CD8-positive, alpha-beta memory T cell (primary cell): ENCODE measurements at regions of chr11 and their contacts with region 1.

Region 1: DNA sequence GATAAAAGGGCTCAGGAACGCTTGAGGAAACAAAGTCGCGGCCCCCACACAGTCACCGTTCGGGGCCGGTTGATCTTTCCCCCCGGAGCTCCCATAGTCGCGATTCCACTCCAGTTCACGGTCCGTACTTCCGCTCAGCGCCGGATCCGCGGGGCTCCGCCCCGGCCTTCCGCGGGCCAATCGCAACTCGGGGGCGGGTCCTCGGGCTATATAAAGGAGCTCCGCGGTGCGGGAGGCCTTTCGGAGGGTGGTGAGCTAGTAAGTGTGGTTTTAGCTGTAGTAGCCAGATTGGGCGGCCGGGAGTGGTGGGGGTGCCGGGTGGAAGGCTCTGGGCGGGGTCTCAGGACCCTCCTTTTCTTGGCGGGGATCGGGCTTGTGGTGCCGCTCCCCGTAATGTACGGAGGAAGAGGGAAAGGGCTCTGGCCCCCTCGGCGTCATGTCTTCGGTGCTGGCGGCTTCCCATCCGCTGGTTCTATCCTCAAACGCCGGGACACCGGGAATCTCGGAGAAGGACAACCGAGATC is at the starts of genes C11orf98 and CSKMT:
- DNase-seq: peak; percentile 89 to 97 (median 94)
- H3K4me3 ChIP-seq: peak within 1 kb of the TSS; percentile 98
- H3K4me3 Mint-ChIP-seq: peak within 1 kb of the TSS; percentile 96 to 100 (median 97)
- H3K27ac ChIP-seq: peak within 1 kb of the TSS; percentile 89
- H3K27ac Mint-ChIP-seq: peak within 1 kb of the TSS; percentile 94 to 99 (median 96)
- H3K4me1 ChIP-seq: peaks cover 24% of the 10 kb centered on the region
- H3K4me1 Mint-ChIP-seq: peaks cover 33 to 53% (median 33%) of the 10 kb centered on the region in 3 donors
- H3K27me3 ChIP-seq: no peaks in the 10 kb centered on the region
- H3K27me3 Mint-ChIP-seq: peaks cover 0 to 4% of the 10 kb centered on the region in 2 donors
- total RNA-seq, gene C11orf98: 178 to 182 TPM
- total RNA-seq, gene CSKMT: 43.1 to 48.3 TPM

Region 2: DNA sequence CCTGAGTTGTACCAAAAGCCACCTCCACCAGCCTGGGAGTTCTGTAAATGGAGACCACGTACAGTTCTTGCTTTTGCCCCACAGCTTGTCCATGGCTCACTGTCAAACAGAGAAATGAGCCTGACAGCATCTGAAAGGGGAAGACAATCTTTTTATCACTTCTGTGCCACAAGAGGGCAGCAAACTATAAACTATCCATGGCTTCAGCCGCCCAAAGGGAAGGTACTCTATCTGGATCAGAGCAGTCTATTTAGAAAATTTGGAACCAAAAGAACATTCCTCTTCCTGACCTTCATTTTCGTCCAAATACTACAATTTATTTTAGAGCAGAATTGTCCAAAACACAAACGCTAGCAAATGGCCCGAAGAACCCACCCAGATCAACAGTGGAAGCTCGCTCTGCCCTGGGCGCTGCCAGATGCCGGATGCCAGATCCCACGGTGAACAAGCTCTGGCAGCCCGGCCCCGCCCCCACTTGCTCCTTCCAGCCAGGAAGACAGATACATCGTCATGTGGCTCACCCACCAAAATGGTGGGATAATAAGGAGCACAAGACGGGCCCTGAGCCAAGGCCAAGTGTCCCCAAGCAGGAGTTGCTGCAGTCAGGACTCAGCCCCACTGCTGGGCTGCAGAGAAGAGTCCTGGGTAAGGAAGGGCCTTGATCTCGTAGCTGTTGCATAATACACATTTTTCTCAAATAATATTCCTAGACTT is 270.2 kb before region 1 on chr11:
- CTCF ChIA-PET with region 1: no interaction called
- POLR2A ChIA-PET with region 1: no interaction called
- DNase-seq: peak; percentile 22 to 62 (median 52)
- H3K4me3 ChIP-seq: no peak overlapping the region
- H3K4me3 Mint-ChIP-seq: no peak overlapping the region
- H3K27ac ChIP-seq: no peak overlapping the region
- H3K27ac Mint-ChIP-seq: no peak overlapping the region
- H3K4me1 ChIP-seq: peaks cover 19% of the 10 kb centered on the region
- H3K4me1 Mint-ChIP-seq: peaks cover 10 to 20% (median 16%) of the 10 kb centered on the region in 3 donors
- H3K27me3 ChIP-seq: no peaks in the 10 kb centered on the region
- H3K27me3 Mint-ChIP-seq: peaks cover 0 to 2% of the 10 kb centered on the region in 2 donors

Region 3: DNA sequence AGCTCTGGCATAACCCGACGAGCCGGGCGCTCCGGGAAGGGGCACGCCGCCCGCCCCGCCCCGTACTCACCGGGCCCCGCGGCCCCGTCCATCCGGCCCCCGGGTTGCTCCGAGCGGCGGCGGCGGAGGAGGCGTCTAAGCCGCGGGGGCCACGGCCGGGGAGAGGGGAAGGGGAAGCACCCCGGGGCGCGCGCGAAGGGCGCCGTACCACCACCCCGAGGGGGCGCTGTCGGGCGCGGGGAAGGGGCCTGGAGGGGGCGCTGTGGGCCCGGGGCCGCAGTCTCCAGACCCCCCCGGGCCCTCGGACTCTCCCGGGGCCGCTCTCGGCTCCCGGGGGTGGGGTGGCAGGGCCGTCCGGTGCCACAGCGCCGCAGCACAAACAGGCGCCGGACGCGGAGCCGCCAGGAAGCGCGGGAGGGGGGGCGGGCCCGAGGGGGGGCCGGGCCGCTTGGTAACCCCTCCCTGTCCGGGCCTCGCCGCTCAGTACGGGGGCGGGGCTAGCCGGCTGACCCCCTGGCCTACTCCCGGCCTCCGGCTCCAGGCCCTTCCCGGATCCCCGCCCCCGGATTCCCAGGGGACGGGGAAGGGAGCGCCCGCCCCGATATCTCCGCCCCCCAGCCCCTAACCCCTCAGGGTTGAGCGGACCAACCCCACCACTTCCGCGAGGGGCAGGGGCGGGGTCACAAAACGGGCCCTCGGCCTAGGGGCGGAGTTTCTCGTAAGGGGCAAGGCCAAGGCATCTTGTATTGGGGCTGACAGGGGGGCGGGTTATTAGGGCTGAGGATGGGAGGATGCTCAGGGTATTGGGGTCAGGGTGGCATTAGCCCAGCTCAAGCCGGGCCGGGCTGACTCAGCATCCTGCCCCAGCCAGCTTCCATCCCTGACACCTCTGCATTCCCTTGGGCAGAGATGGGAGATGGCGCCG is 52.5 kb before region 1 on chr11 and contains the starts of genes EML3 and ROM1:
- CTCF ChIA-PET with region 1: interaction called, 13 read pairs
- POLR2A ChIA-PET with region 1: interaction called, 4 read pairs
- DNase-seq: peak; percentile 81 to 93 (median 85)
- H3K4me3 ChIP-seq: peak within 1 kb of the TSS; percentile 76
- H3K4me3 Mint-ChIP-seq: peak within 1 kb of the TSS; percentile 89 to 99 (median 95)
- H3K27ac ChIP-seq: peak within 1 kb of the TSS; percentile 83
- H3K27ac Mint-ChIP-seq: peak within 1 kb of the TSS; percentile 92 to 99 (median 97)
- H3K4me1 ChIP-seq: peaks cover 30% of the 10 kb centered on the region
- H3K4me1 Mint-ChIP-seq: peaks cover 39 to 64% (median 42%) of the 10 kb centered on the region in 3 donors
- H3K27me3 ChIP-seq: no peaks in the 10 kb centered on the region
- H3K27me3 Mint-ChIP-seq: no peaks in the 10 kb centered on the region
- total RNA-seq, gene EML3: 133 to 134 TPM
- total RNA-seq, gene ROM1: 4.9 to 5.3 TPM

Region 4: GRCh38 chr11:62652161-62653006 is 12.8 kb before region 1 on chr11:
- CTCF ChIA-PET with region 1: interaction called, 27 read pairs
- POLR2A ChIA-PET with region 1: interaction called, 52 read pairs
- DNase-seq: peak in 1 of 5 donors; percentile 65
- H3K4me3 ChIP-seq: peak overlapping the region; percentile 83
- H3K4me3 Mint-ChIP-seq: peak overlapping the region; percentile 85 to 95 (median 91)
- H3K27ac ChIP-seq: peak overlapping the region; percentile 87
- H3K27ac Mint-ChIP-seq: peak overlapping the region; percentile 80 to 97 (median 86)
- H3K4me1 ChIP-seq: peaks cover 15% of the 10 kb centered on the region
- H3K4me1 Mint-ChIP-seq: peaks cover 15 to 29% (median 20%) of the 10 kb centered on the region in 3 donors
- H3K27me3 ChIP-seq: no peaks in the 10 kb centered on the region
- H3K27me3 Mint-ChIP-seq: peaks cover 0 to 7% of the 10 kb centered on the region in 2 donors

Region 5: DNA sequence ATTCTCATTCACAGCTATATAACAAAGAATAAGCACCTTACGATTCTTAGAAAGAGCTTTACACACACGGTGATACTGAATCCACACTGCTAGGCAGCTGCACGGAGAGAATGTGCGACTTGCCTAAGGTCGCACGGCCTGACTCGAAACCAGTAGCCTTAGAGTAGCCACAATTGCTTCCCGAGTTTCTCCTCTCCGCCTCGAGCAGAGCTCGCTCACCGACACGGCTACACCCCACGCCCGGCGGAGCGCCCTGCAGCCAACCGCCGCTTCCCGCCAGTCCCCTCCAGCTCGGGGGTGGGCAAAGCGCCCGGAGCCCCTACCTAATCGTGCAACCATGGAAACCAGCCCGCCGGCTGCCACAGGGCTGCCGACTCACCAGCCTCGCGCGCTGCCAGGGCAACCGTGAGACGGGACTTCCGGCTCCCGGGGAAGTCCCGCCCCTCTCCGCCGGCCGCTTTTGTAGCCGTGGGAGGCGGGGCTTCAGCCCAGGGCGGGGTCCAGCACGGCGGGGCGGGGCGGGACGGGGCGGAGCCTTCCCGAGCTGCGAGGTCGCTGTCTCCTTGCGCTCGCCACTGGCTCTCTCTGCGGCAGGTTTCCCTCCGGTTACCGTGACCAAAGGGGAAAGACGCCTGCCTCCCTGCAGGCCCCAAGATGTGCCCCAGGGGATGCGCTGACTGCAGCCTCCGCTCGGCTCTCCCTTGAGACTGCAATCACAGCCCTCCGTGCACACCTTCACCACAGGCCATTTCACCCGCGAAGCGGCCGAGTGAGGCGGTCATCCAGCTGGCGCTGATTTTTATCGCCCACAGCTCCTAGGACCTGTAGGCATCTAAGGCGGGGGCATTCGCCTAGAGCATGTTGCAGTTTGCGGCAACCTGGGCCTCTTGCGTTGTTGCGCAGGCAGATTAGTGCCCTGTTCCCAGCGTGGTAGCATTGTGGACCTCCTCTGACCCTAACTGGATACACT is 41.0 kb after region 1 on chr11:
- CTCF ChIA-PET with region 1: interaction called, 5 read pairs
- POLR2A ChIA-PET with region 1: interaction called, 13 read pairs
- DNase-seq: peak; percentile 92 to 98 (median 95)
- H3K4me3 ChIP-seq: peak overlapping the region; percentile 88
- H3K4me3 Mint-ChIP-seq: peak overlapping the region; percentile 86 to 95 (median 89)
- H3K27ac ChIP-seq: peak overlapping the region; percentile 95
- H3K27ac Mint-ChIP-seq: peak overlapping the region; percentile 92 to 99 (median 94)
- H3K4me1 ChIP-seq: peaks cover 48% of the 10 kb centered on the region
- H3K4me1 Mint-ChIP-seq: peaks cover 36 to 49% (median 41%) of the 10 kb centered on the region in 3 donors
- H3K27me3 ChIP-seq: no peaks in the 10 kb centered on the region
- H3K27me3 Mint-ChIP-seq: no peaks in the 10 kb centered on the region

Region 6: GRCh38 chr11:62855571-62856332 is 190.6 kb after region 1 on chr11:
- CTCF ChIA-PET with region 1: interaction called, 3 read pairs
- POLR2A ChIA-PET with region 1: interaction called, 10 read pairs
- DNase-seq: peak; percentile 94 to 99 (median 98)
- H3K4me3 ChIP-seq: peak overlapping the region; percentile 98
- H3K4me3 Mint-ChIP-seq: peak overlapping the region; percentile 94 to 99 (median 98)
- H3K27ac ChIP-seq: peak overlapping the region; percentile 94
- H3K27ac Mint-ChIP-seq: peak overlapping the region; percentile 84 to 96 (median 94)
- H3K4me1 ChIP-seq: peaks cover 47% of the 10 kb centered on the region
- H3K4me1 Mint-ChIP-seq: peaks cover 46 to 63% (median 55%) of the 10 kb centered on the region in 3 donors
- H3K27me3 ChIP-seq: no peaks in the 10 kb centered on the region
- H3K27me3 Mint-ChIP-seq: peaks cover 0 to 6% of the 10 kb centered on the region in 2 donors

Region 7: GRCh38 chr11:62888406-62888805 is 223.3 kb after region 1 on chr11:
- CTCF ChIA-PET with region 1: no interaction called
- POLR2A ChIA-PET with region 1: no interaction called
- DNase-seq: no peak
- H3K4me3 ChIP-seq: no peak overlapping the region
- H3K4me3 Mint-ChIP-seq: no peak overlapping the region
- H3K27ac ChIP-seq: no peak overlapping the region
- H3K27ac Mint-ChIP-seq: peak overlapping the region in 1 of 8 donors; percentile 58
- H3K4me1 ChIP-seq: peaks cover 11% of the 10 kb centered on the region
- H3K4me1 Mint-ChIP-seq: peaks cover 20 to 23% (median 20%) of the 10 kb centered on the region in 3 donors
- H3K27me3 ChIP-seq: no peaks in the 10 kb centered on the region
- H3K27me3 Mint-ChIP-seq: no peaks in the 10 kb centered on the region